K562 (cell line): ENCODE measurements at regions of chr1 and their contacts with region 1.

Region 1: DNA sequence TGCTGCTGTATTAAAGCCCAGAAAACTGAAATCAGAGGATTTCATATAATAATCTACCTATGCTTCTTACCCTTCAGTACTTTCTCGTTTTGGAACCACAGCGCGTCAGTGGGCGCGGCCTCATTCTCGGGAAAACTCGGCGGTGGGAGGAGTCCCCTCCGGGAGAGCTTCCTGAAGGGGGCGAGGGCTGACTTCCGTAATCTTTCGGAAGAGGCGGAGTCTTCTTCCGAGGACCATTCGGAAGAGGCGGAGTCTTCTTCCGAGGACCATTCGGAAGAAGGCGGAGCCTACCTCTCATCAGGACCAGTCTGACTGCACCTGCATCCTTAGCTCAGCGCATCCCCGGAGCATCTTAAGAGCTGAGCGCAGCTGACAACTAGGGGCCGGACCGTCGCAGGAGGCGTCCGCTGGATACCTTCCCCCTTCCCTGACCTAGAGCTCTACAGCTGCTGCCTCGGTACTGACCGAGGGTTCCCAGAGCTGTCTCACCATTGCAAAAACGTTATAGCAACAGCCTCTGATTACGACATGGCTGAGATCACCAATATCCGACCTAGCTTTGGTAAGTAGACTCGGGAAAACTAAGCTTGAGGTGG is at the start of gene SYT11:
- DNase-seq: peak; percentile 97 to 98 (median 97)
- ATAC-seq: peak; percentile 89
- H3K4me3 ChIP-seq: peak within 1 kb of the TSS; percentile 60
- H3K27ac ChIP-seq: peak within 1 kb of the TSS; percentile 92
- H3K4me1 ChIP-seq: peaks cover 10 to 14% of the 10 kb centered on the region in 2 experiments; a peak in 4 of 5 replicates
- H3K27me3 ChIP-seq: no peaks in the 10 kb centered on the region
- CTCF ChIP-seq: no peak
- EP300 ChIP-seq: no peak
- POLR2A ChIP-seq: peak; percentile 53; the same call in 1 of the 2 replicates
- RAD21 ChIP-seq: no peak
- polyA plus RNA-seq, gene SYT11: 0.08 to 0.11 TPM

Region 2: GRCh38 chr1:155834296-155834926 is 24.9 kb before region 1 on chr1:
- CTCF ChIA-PET with region 1: no interaction called
- POLR2A ChIA-PET with region 1: interaction called, 5 read pairs
- in situ Hi-C with region 1: no loop called
- intact Hi-C with region 1: loop called (anchors 1 kb)
- DNase-seq: peak; percentile 64 to 94 (median 77)
- ATAC-seq: peak; percentile 94
- H3K4me3 ChIP-seq: peak overlapping the region; percentile 45
- H3K27ac ChIP-seq: peak overlapping the region; percentile 90
- H3K4me1 ChIP-seq: peaks cover 20 to 26% of the 10 kb centered on the region in 2 experiments
- H3K27me3 ChIP-seq: no peaks in the 10 kb centered on the region
- CTCF ChIP-seq: no peak
- EP300 ChIP-seq: peak; percentile 31
- POLR2A ChIP-seq: peak; percentile 81
- RAD21 ChIP-seq: no peak

Region 3: DNA sequence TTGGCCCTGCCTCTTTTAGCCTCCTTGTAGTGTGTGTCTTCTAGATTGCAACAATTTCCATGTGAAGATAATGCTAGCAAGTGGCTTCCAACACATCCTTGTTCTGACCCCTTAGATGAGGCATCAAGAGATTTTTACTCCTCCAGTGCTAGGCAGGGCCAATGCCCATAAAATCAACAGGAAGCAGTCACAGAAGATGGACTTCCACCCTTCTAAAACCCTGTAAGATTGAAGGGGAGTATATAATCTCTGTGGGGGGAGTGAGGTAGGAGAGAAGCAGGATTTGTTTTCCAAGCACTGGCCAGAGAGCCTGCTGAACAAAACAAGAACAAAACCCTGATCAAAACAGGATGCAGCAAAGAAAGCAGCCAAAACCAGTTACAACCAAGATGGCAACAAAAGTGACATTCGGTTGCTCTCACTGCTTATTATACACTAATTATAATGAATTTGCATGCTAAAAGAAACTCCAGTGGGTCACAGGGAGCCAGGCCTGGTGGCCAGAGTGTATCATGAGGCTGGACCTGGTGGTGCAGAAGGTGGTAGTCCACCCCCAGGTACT is 14.4 kb before region 1 on chr1:
- CTCF ChIA-PET with region 1: no interaction called
- POLR2A ChIA-PET with region 1: interaction called, 10 read pairs
- in situ Hi-C with region 1: no loop called
- intact Hi-C with region 1: no loop called
- DNase-seq: no peak
- ATAC-seq: no peak
- H3K4me3 ChIP-seq: no peak overlapping the region
- H3K27ac ChIP-seq: no peak overlapping the region
- H3K4me1 ChIP-seq: peaks cover 0 to 13% of the 10 kb centered on the region in 2 experiments; a peak in 1 of 5 replicates
- H3K27me3 ChIP-seq: no peaks in the 10 kb centered on the region
- CTCF ChIP-seq: no peak
- EP300 ChIP-seq: no peak
- POLR2A ChIP-seq: no peak
- RAD21 ChIP-seq: no peak

Region 4: DNA sequence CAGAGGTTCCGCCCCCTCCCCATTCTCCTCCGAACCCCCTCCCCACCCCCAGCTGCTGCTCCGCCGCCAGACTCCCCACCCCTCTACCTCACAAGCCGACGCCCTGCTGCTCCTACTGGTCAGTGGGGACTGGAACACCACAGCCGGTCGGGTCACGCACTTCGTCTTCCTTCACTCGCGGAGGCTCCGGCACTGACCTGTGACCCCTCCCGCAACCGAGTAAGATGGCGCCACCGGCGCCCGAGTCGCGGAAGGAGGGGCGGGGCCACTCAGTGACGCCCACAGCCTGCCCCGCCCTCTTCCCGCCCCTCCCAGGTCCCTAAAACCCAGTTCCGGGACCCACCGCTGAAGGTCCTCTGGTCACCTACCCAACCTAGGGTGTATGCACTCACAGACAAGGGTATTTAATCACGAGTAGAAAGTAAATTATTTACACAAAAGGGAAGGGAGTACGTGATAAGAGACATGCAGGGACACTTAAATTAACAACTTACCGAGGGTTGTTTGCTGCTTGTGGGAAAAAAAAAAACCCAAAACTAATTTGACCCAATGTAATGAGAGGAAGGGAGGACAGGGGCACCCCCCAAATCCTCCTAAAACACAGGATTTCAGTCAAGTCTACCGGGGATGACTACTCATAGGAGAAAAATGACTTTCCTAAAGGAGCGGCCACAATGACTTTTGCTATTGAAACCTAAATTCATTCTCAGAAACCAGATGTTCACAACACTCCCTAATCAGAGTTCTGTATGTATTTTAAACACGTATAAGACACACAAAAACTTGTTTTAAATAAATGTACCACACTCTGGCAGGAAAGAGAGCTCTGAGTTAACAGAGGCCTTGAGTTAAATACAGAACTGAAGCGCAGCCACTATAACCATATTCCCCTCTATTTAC is 52.1 kb after region 1 on chr1 and contains the start of gene RIT1:
- CTCF ChIA-PET with region 1: no interaction called
- POLR2A ChIA-PET with region 1: interaction called, 4 read pairs
- in situ Hi-C with region 1: no loop called
- intact Hi-C with region 1: loop called (anchors 2 kb)
- DNase-seq: peak; percentile 91 to 95 (median 94)
- ATAC-seq: peak; percentile 95
- H3K4me3 ChIP-seq: peak within 1 kb of the TSS; percentile 48
- H3K27ac ChIP-seq: peak within 1 kb of the TSS; percentile 73
- H3K4me1 ChIP-seq: peaks cover 3 to 7% of the 10 kb centered on the region in 2 experiments; a peak in 2 of 5 replicates
- H3K27me3 ChIP-seq: no peaks in the 10 kb centered on the region
- CTCF ChIP-seq: peak in 1 of 3 experiments; percentile 12; a peak in 1 of 6 replicates
- EP300 ChIP-seq: no peak
- POLR2A ChIP-seq: peak; percentile 50; the same call in 1 of the 2 replicates
- RAD21 ChIP-seq: no peak
- polyA plus RNA-seq, gene RIT1: 53.7 to 57.1 TPM